ENCODE measurements at regions of chr1 and their contacts with region 1.

Region 1: GRCh38 chr1:10209905-10210810 is at the start of gene KIF1B:
- H3K4me3 ChIP-seq: peak within 1 kb of the TSS; percentile 96
- H3K27ac ChIP-seq: peak within 1 kb of the TSS; percentile 90
- H3K4me1 ChIP-seq: peaks cover 11% of the 10 kb centered on the region
- CTCF ChIP-seq: peak; percentile 100

Region 2: DNA sequence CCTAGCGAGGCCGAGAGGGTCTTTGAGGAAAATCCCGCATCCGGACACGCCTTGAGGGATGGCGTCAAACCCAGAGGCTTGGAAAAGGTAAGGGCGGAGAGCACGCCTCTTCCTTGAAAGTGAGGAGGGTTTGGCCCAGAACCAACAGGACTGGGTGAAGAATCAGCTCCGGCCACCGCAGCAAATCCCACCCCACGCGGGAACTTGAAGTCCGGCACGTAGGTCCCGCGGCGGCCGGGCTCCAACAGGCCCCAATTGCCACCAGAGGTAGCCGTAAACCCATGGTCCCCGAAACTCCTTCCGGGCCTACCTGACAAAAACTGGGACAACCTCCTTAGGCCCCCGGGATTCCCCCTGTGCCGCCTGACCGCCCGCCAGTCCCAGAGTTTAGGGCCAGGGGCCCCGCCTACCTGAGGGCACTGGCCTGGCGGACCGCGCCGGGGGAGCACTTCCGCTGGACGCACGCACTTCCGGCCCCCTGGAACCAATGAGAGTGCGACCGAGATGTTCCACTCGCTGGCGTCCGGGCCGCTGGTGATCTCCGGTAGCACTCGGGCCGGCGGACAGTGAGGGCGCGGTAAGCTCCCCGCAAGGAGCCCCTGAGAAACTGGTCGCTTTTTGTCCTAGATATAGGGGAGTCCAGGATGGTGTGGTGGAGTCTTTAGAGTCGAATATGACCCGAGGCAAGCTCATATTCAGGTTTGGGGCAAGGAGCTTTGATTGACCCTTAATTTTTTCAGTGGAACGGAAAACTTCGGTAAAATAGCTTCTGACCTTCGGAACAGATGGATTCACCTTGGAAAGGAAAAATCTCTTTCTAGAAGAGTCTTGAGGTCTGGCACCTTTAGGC is 267.0 kb before region 1 on chr1 and contains the starts of genes LZIC and NMNAT1:
- CTCF ChIA-PET with region 1: interaction called, 5 read pairs
- POLR2A ChIA-PET with region 1: interaction called, 13 read pairs
- H3K4me3 ChIP-seq: peak within 1 kb of the TSS; percentile 89
- H3K27ac ChIP-seq: peak within 1 kb of the TSS; percentile 69
- H3K4me1 ChIP-seq: no peaks in the 10 kb centered on the region
- CTCF ChIP-seq: peak; percentile 13; the same call in 1 of the 2 replicates

Region 3: DNA sequence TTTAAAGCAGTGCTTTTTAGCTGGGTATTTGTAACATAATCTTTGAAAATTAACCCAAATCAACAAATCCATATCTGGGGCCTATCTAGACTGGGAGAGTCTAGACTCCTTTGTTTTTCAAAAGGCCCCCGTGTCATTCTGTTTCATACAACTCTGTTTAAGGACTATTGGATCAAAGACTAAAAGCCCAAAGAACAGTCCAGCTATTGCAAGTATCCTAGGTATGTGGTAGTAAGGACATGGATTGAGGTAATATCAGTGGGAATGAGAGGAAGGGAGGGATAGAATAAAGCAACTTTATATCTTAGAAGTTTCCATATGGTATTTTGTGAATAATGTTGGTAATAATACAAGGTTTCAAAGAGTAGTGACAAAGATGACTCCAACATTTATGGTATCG is 18.4 kb after region 1 on chr1:
- CTCF ChIA-PET with region 1: interaction called, 13 read pairs
- POLR2A ChIA-PET with region 1: interaction called, 5 read pairs
- H3K4me3 ChIP-seq: no peak overlapping the region
- H3K27ac ChIP-seq: no peak overlapping the region
- H3K4me1 ChIP-seq: 0 out of 2 replicates have a peak, but pooled peaks cover 4% of the 10 kb centered on the region
- CTCF ChIP-seq: no peak

Region 4: DNA sequence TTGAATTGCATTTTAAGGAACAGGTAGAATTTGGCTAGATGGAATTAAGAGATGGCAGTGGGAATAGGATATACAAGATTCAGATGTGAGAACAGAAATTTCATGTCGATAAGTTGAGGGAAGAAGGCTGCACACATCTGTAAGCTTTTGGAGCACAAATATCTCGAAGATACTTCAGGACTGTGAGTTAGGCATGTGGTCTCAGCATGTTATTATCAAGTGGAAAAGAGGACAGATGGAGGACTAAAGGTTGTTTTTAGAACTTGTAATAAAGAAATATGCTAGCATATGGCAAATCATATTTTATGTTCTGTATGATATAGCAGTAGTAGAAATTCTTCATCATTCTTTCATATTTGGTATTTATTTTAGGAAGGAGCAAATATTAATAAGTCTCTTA is 61.7 kb after region 1 on chr1:
- CTCF ChIA-PET with region 1: interaction called, 10 read pairs
- POLR2A ChIA-PET with region 1: interaction called, 3 read pairs
- H3K4me3 ChIP-seq: no peak overlapping the region
- H3K27ac ChIP-seq: no peak overlapping the region
- H3K4me1 ChIP-seq: no peaks in the 10 kb centered on the region
- CTCF ChIP-seq: no peak

Region 5: DNA sequence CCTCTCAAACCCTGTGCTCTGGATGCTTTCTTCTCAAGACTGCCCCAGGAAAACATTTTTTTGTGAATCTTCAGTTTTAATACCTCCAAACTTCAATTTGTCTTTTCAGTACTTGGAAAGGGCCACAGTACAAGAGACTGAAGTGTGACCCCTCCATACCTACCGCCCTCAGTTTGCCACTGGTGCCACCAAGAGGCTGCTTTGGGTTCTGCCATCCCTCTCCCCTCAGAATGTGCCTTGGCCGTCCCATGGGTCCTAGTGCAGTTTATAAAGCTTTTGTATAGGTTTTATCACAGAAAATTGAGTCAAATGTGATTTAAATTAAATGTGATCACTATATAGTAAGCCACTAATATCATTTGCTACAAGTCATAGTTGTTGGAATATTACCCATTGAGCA is 127.9 kb after region 1 on chr1:
- CTCF ChIA-PET with region 1: interaction called, 25 read pairs
- POLR2A ChIA-PET with region 1: interaction called, 3 read pairs
- H3K4me3 ChIP-seq: no peak overlapping the region
- H3K27ac ChIP-seq: no peak overlapping the region
- H3K4me1 ChIP-seq: peaks cover 4% of the 10 kb centered on the region; the same call in 1 of the 2 replicates
- CTCF ChIP-seq: peak; percentile 63

Measured in HEK293 (cell line).